Activated CD4-positive, alpha-beta memory T cell treated with anti-CD3 and anti-CD28 coated beads for 36 hours (primary cell): ENCODE measurements at regions of chr12 and their contacts with region 1.

Region 1: DNA sequence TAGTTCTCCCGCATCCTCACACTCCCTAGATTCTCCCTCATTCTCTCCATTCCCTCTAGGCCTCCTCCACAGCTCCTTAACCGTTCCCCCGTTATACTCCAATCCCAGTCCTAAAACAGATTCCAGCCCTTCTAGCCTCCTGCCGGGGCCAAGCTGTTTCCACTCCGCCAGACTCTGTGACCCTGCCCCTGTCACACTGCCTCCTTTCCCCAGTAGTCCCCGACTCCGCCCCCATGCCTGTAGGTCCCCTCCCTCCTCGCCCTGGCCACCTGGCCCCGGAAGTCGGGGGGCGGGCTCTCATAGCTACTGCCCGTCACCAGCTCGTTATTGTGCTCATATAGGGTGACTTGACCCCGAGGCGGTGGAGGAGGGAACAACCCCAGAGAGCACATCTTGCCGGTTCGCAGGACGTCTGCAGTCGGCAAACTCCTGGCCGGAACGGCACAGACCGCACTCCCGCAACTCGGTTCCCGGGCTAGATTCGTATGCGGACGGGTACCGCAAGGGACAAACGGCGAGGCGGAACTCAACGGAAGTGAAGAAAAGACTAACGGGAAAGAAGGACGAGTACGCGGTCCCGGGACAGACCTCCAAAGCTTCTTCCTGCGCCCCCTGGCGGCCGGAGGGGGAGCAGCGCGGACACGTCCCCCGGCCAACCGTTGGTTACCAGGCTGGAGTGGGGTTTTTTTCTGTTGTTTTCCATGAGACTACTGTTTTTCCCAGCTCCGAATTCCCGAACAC is at the start of gene AAAS:
- DNase-seq: peak; percentile 98
- H3K4me3 Mint-ChIP-seq: peak within 1 kb of the TSS; percentile 86
- H3K27ac Mint-ChIP-seq: peak within 1 kb of the TSS; percentile 94
- H3K4me1 Mint-ChIP-seq: peaks cover 38% of the 10 kb centered on the region
- H3K27me3 Mint-ChIP-seq: no peaks in the 10 kb centered on the region
- total RNA-seq, gene AAAS: 74.5 to 80.7 TPM

Region 2: GRCh38 chr12:52945591-52946346 is 375.5 kb before region 1 on chr12:
- CTCF ChIA-PET with region 1: no interaction called
- POLR2A ChIA-PET with region 1: no interaction called
- intact Hi-C with region 1: no loop called
- DNase-seq: no peak
- H3K4me3 Mint-ChIP-seq: no peak overlapping the region
- H3K27ac Mint-ChIP-seq: no peak overlapping the region
- H3K4me1 Mint-ChIP-seq: peaks cover 3% of the 10 kb centered on the region
- H3K27me3 Mint-ChIP-seq: no peaks in the 10 kb centered on the region

Region 3: DNA sequence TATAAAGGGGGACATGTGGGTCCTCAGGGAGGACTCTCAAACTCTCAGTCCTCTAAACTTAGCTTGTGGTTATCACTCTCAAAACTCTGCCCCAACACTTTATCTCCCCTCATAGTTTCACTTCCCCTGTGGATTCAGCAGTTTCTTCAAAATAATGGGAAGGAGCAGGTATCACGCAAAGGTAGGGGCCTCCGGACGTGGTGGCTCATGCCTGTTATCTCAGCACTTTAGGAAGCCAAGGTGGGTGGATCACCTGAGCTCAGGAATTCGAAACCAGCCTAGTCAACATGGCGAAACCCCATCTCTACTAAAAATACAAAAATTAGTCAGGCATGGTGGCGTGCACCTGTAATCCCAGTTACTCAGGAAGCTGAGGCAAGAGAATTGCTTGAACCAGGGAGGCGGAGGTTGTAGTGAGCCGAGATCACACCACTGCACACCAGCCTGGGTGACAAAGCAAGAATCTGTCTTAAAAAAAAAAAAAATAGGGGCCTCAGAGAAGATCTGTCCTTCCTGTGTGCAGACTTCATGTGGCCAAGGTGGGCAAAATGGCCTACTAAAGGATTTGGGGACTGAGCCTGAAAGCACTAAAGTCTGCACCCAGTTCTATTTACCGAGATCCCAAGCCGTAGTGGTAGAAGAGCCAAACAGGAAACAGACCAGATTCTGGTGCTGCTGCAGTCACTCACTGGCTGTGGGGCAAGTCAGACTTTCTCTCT is 120.6 kb before region 1 on chr12:
- CTCF ChIA-PET with region 1: interaction called, 13 read pairs
- POLR2A ChIA-PET with region 1: interaction called, 5 read pairs
- intact Hi-C with region 1: no loop called
- DNase-seq: peak; percentile 77
- H3K4me3 Mint-ChIP-seq: peak overlapping the region; percentile 45
- H3K27ac Mint-ChIP-seq: peak overlapping the region; percentile 88
- H3K4me1 Mint-ChIP-seq: peaks cover 72% of the 10 kb centered on the region
- H3K27me3 Mint-ChIP-seq: no peaks in the 10 kb centered on the region

Region 4: GRCh38 chr12:53267999-53268647 is 53.1 kb before region 1 on chr12 and contains the start of gene ESPL1:
- CTCF ChIA-PET with region 1: interaction called, 19 read pairs
- POLR2A ChIA-PET with region 1: interaction called, 12 read pairs
- intact Hi-C with region 1: loop called (anchors 1 kb)
- DNase-seq: peak; percentile 93
- H3K4me3 Mint-ChIP-seq: peak within 1 kb of the TSS; percentile 97
- H3K27ac Mint-ChIP-seq: peak within 1 kb of the TSS; percentile 95
- H3K4me1 Mint-ChIP-seq: peaks cover 36% of the 10 kb centered on the region
- H3K27me3 Mint-ChIP-seq: no peaks in the 10 kb centered on the region
- total RNA-seq, gene ESPL1: 70.0 to 77.2 TPM

Region 5: DNA sequence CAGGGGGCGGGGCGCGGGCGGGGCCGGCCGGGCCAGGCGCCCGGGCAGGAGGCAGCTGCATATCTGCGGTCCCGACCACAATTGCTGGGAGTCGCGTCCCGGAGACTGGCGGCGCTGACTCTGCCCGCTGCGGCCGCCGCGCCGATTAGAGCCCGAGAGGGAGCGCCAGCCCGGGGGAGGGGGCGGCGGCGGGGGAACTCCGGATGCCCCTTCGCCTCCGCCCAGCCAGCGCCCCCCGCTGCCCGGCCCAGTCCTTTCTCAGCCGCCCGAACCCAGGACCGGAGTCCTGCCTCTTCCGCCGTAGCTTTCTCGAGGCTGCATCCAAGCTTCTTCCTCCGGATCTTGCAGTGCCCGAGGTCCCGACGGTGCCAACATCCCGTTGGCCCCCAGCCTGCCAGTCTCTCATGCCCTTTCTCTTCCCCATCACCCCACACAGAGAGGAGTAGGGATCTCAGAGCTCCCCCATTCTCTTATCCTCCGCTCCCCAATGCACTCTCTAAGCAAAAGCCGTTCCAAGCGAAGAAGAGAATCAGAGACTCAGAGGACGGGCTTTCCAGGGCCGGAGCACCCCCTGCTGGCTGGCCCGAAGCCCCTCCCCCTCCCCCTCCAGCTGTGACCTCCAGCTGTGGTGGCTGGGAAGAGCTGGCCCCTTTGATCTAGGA is 23.7 kb after region 1 on chr12:
- CTCF ChIA-PET with region 1: interaction called, 252 read pairs
- POLR2A ChIA-PET with region 1: interaction called, 21 read pairs
- intact Hi-C with region 1: loop called (anchors 1 kb)
- DNase-seq: peak; percentile 86
- H3K4me3 Mint-ChIP-seq: peak overlapping the region; percentile 92
- H3K27ac Mint-ChIP-seq: peak overlapping the region; percentile 56
- H3K4me1 Mint-ChIP-seq: peaks cover 14% of the 10 kb centered on the region
- H3K27me3 Mint-ChIP-seq: no peaks in the 10 kb centered on the region

Region 6: DNA sequence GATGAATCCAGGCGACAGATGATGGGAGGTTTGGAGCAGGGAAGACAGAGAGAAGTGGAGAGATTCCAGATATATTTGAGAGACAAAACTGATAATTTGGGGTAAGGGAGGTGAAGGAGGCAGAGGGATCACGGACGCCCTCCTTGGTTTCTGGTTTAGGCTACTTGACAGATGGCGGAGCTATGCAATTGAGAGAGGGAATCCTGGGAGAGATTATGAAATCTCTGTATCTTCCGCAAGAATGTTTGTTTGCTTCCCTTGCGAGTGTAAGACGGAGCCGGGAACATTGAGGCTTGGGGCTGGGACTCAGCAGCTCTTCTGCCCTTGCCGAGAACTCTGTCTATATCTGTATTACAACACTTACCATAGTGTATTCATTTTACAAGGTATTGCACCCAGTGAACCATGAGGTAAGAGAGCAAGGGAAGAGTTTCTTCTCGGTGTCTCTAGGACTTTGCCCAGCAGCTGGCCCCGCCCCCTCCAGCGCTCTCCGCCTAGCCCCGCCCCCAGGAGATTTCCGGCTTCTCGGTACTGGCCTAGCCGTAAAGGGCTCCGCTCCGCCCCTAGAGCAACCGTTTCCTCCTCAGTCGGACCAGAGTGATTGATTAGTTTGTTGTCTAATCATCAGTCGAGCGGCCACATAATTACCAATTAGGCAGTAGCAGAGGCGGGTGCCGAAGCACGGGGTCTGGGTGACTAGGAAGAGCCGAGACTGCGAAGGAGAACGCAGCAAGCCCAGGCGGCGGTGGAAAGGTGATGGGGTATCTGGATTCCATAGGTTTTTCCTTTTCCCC is 120.0 kb after region 1 on chr12 and contains the start of gene PRR13:
- CTCF ChIA-PET with region 1: interaction called, 4 read pairs
- POLR2A ChIA-PET with region 1: interaction called, 6 read pairs
- intact Hi-C with region 1: loop called (anchors 1 kb)
- DNase-seq: peak; percentile 100
- H3K4me3 Mint-ChIP-seq: peak within 1 kb of the TSS; percentile 97
- H3K27ac Mint-ChIP-seq: peak within 1 kb of the TSS; percentile 93
- H3K4me1 Mint-ChIP-seq: peaks cover 37% of the 10 kb centered on the region
- H3K27me3 Mint-ChIP-seq: no peaks in the 10 kb centered on the region
- total RNA-seq, gene PRR13: 218 to 221 TPM